ENCODE measurements at regions of chr17 and their contacts with region 1.

Region 1: GRCh38 chr17:65100316-65101140 is 36.6 kb upstream of the RGS9 start:
- DNase-seq: peak; percentile 85
- H3K4me3 Mint-ChIP-seq: peak overlapping the region; percentile 76
- H3K27ac Mint-ChIP-seq: peak overlapping the region; percentile 85
- H3K4me1 Mint-ChIP-seq: peaks cover 25% of the 10 kb centered on the region
- H3K27me3 Mint-ChIP-seq: no peaks in the 10 kb centered on the region

Region 2: GRCh38 chr17:64920026-64920418 is 180.5 kb before region 1 on chr17:
- CTCF ChIA-PET with region 1: interaction called, 16 read pairs
- POLR2A ChIA-PET with region 1: no interaction called
- intact Hi-C with region 1: no loop called
- DNase-seq: no peak
- H3K4me3 Mint-ChIP-seq: peak overlapping the region; percentile 81
- H3K27ac Mint-ChIP-seq: peak overlapping the region; percentile 87
- H3K4me1 Mint-ChIP-seq: peaks cover 8% of the 10 kb centered on the region
- H3K27me3 Mint-ChIP-seq: no peaks in the 10 kb centered on the region

Region 3: DNA sequence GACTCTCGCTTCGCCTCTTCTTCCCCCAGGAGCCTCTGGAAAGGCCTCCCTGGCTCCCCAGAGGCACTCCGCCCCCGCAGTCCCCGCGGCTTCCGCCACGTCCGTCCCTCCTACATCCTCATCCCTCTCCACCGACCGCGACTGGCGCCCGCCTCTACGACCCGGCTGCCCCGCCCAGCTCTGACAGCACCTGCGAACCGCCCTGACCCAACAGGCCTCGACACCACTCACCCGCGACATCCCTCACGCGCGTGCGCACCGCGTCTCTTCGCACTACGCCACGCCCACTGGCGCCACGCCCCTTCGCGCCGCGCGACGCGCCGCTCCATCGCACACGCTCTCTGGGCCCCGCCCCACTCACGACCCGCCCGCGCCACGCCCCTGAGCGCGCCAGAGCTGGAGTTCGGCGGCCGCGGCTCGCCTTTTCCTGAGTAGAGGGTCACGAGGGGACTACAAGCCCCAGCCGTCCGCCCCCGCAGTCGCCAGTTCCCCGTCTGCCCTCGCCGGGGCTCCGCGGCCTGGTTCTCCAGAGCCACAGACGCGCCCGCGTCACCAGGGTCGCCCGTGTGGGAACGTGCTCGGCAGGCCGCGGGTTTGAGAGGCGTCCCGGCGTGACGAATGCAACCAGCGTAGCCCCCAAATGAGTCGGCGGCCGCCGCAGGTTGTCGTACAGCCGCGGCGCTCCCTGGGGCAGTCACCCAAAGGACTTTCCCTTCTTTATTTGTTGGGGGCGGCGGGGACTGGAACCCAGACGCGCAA is 125.0 kb before region 1 on chr17:
- CTCF ChIA-PET with region 1: interaction called, 12 read pairs
- POLR2A ChIA-PET with region 1: interaction called, 10 read pairs
- intact Hi-C with region 1: loop called (anchors 2 kb)
- DNase-seq: peak; percentile 97
- H3K4me3 Mint-ChIP-seq: peak overlapping the region; percentile 82
- H3K27ac Mint-ChIP-seq: peak overlapping the region; percentile 100
- H3K4me1 Mint-ChIP-seq: peaks cover 55% of the 10 kb centered on the region
- H3K27me3 Mint-ChIP-seq: no peaks in the 10 kb centered on the region

Region 4: GRCh38 chr17:65039336-65039988 is 61.1 kb before region 1 on chr17:
- CTCF ChIA-PET with region 1: interaction called, 16 read pairs
- POLR2A ChIA-PET with region 1: no interaction called
- intact Hi-C with region 1: loop called (anchors 1 kb)
- DNase-seq: peak; percentile 65
- H3K4me3 Mint-ChIP-seq: peak overlapping the region; percentile 60
- H3K27ac Mint-ChIP-seq: peak overlapping the region; percentile 87
- H3K4me1 Mint-ChIP-seq: peaks cover 81% of the 10 kb centered on the region
- H3K27me3 Mint-ChIP-seq: no peaks in the 10 kb centered on the region

Region 5: DNA sequence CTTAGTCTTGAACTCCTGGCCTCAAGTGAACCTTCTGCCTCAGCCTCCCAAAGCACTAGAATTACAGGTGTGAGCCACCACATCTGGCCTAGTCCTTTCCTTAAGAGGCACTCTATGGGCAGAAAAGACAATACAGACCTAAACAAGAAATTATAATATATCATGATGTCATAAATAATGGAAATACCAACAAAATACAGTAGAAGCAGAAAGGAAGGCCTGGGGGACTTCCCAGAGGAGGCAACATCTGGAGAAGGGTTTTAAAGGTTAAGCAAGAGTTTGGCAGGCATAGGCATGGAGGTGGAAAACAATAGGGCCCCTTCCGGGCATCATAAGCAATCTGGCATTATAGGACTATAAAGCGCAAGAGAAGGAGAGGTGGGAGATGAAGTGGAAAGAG is 19.1 kb before region 1 on chr17:
- CTCF ChIA-PET with region 1: interaction called, 10 read pairs
- POLR2A ChIA-PET with region 1: interaction called, 3 read pairs
- intact Hi-C with region 1: no loop called
- DNase-seq: no peak
- H3K4me3 Mint-ChIP-seq: no peak overlapping the region
- H3K27ac Mint-ChIP-seq: no peak overlapping the region
- H3K4me1 Mint-ChIP-seq: no peaks in the 10 kb centered on the region
- H3K27me3 Mint-ChIP-seq: no peaks in the 10 kb centered on the region

Region 6: DNA sequence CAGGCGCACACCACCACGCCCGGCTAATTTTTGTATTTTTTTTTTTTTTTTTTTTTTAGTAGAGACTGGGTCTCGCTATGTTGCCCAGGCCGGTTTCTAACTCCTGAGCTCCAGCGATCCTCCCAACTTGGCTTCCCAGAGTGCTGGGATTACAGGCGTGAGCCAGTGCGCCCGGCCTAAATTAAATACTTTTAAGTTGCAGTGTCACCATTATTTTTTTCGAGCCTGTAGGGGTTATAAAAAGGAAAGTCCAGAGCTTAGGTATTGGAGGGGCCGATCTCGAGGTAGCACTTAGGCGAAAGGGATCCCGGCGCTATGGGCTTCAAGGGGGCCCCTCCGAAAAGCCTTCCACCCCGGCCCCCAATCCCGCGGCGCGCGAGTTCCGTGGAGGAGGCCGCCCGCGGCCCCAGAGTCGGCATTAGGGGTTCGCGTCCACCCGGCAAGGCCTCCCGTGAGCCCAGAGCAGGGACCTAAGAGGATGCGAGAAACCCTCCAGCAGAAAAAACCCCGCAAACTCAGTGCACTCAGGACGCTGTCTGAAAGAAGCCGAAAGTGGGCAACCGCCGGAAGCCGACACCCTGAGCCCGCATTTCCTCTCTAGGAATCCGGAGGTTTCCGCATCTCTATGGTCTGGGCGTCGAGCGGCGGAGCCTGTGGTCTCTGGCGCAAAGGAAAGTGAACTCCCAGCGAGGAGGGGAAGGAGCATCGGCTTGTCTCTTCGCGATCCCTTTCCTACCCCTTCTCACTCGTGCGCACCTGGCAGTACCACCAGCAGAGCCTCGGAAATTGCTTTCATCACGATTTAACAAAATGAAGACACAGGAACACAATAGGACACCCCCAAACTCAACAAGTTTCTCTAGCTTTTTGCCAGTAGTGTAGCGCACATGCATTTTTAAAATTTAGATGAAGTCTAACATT is 22.6 kb after region 1 on chr17:
- CTCF ChIA-PET with region 1: interaction called, 26 read pairs
- POLR2A ChIA-PET with region 1: interaction called, 9 read pairs
- intact Hi-C with region 1: loop called (anchors 1 kb)
- DNase-seq: peak; percentile 90
- H3K4me3 Mint-ChIP-seq: peak overlapping the region; percentile 78
- H3K27ac Mint-ChIP-seq: peak overlapping the region; percentile 90
- H3K4me1 Mint-ChIP-seq: peaks cover 23% of the 10 kb centered on the region
- H3K27me3 Mint-ChIP-seq: no peaks in the 10 kb centered on the region

Region 7: GRCh38 chr17:65181237-65182061 is 80.9 kb after region 1 on chr17:
- CTCF ChIA-PET with region 1: interaction called, 18 read pairs
- POLR2A ChIA-PET with region 1: no interaction called
- intact Hi-C with region 1: no loop called
- DNase-seq: peak; percentile 82
- H3K4me3 Mint-ChIP-seq: peak overlapping the region; percentile 16
- H3K27ac Mint-ChIP-seq: peak overlapping the region; percentile 90
- H3K4me1 Mint-ChIP-seq: peaks cover 68% of the 10 kb centered on the region
- H3K27me3 Mint-ChIP-seq: no peaks in the 10 kb centered on the region